Head of caudate nucleus (tissue), 42 donors: ENCODE measurements at regions of chr2 and their contacts with region 1.

Region 1: DNA sequence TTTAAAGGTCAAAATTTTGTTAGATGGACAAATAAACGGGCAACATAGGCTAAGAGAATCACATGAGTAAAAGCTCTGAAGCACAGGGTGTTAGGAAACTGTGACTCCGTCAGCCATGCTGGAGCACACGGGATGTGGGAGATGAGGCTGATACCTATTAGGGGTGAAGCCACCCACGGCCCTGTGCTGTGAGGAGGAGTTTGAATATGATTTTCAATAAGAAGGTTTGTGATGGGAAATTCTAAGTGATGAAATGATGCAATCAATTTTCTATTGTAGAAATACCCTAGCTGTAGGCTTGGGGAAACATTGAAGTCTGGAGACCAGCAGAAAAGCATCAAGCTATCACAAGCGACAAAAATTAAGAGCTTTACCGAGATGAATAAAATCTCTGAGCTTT is 431.3 kb downstream of the CMPK2 start:
- DNase-seq: peak; percentile 15 to 92 (median 65)

Region 2: GRCh38 chr2:6113791-6114190 is 320.6 kb before region 1 on chr2:
- intact Hi-C with region 1: no loop called
- DNase-seq: peak in 15 of 42 donors; percentile 6 to 62 (median 17)

Region 3: DNA sequence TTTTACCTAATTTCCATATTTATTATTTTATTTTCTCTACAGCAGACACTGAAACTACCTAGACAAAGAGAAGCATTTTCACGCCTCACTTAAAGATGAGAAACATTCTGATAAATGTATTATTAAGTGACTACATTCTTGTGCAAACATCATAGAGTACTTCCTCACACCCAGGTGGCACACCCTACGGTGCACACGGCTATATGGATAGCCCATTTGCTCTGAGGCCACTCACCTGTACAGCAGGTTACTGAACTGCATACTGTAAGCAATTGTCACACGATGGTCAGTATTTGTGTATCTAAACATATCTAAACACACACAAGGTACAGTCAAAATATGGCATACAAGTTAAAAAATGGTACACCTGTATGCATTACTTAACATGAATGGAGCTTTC is 50.1 kb before region 1 on chr2:
- intact Hi-C with region 1: loop called (anchors 10 kb)
- DNase-seq: no peak

Region 4: DNA sequence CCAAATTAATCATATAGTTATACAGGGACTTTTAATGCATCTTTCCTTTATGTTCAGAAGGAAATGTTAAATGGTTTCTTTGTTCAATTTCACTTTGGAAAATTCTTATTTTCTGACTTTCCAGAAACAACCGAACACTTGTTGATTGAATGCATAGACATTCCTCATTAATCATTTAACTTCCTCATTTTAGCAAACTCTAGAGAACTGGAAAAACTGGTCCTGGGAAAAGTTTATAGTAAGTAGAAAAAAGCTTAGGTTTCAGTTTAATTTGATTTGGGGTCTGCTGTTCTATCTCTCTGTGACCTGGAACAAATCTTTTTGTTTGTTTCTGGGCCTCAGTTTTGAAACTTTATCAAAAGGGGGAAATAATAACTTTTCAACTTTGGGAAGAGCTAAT is 110.9 kb after region 1 on chr2:
- intact Hi-C with region 1: no loop called
- DNase-seq: no peak